RWPE1 (cell line): ENCODE measurements at regions of chr2 and their contacts with region 1.

Region 1: DNA sequence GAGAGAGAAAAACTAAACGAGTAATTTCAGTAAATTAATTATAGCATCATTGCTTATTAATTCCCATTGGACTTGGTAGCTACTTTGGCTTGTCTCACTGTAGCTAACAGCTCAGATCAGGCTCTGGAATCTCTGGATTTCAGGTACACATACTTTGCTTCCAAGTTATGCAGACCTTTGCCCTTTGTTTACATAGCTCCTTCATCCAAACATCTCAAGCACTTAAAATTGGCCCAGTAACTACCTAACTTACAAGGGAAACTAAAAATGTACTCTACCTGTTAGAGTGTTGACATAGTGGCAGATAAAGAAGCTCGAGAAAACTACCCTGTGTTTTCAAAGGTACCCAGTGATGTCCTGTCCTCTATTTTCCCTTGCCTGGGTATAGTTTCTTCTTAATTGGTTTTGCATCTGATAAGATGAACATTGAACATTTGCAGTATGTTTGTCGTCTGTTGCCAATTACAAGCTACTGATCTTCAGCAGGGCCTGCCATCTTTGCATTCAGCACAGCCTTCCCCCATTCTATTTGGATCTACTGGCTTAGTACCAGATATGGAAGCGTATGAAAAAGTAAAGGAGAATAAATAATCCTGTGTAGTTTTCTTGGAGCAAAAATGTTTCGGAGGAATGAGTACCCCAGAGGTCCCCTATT is 601.5 kb upstream of the FANCL start:
- DNase-seq: no peak
- H3K27ac ChIP-seq: no peak overlapping the region
- CTCF ChIP-seq: no peak

Region 2: GRCh38 chr2:58620093-58620492 is 222.5 kb before region 1 on chr2:
- CTCF ChIA-PET with region 1: no interaction called
- POLR2A ChIA-PET with region 1: interaction called, 10 read pairs
- DNase-seq: peak; percentile 79
- H3K27ac ChIP-seq: no peak overlapping the region
- CTCF ChIP-seq: no peak

Region 3: GRCh38 chr2:58862244-58862643 is 19.6 kb after region 1 on chr2:
- CTCF ChIA-PET with region 1: no interaction called
- POLR2A ChIA-PET with region 1: no interaction called
- DNase-seq: no peak
- H3K27ac ChIP-seq: no peak overlapping the region
- CTCF ChIP-seq: no peak

Region 4: DNA sequence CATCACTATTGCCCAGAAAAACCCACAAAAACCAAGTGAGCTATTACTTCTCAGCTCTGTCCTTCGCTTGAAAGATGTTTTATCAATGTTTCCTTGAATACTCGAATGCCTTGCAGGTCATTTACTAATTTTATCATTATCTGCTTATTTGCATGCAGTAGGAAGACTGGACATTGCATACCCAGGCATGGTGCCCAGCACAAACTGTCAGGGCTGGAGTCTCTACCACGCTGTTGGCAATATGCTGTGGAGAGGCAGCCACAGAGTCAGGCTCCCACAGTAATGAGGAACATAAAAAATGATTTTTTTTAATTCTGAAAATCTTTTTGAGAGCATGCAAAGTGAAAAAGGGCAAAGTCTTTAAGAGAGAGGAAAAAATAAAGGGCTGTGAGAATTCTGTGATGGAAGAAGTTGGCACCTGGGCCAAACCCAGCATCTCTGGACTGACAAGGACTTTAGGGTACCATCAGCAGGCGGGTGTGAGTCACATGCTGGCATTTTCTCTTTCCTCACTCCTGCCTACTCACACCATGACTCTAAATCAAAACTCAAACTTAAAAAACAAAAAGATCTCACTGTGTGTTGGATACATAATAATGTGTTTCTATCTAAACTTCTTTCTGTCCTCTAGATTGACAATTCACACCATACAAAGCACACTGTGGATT is 108.3 kb after region 1 on chr2:
- CTCF ChIA-PET with region 1: no interaction called
- POLR2A ChIA-PET with region 1: no interaction called
- DNase-seq: no peak
- H3K27ac ChIP-seq: no peak overlapping the region
- CTCF ChIP-seq: no peak